Activated T-helper 1 cell treated with anti-CD3 and anti-CD28 coated beads, Interleukin-12 subunit alpha, Interleukin-12 subunit beta, Interleukin-2, Interleukin-4 antibody, amounts not matched to agents 30 ng/mL and 10 ng/mL and 1 ng/mL, durations not matched to agents 14 hours and 24 hours and 36 hours (primary cell): ENCODE measurements at regions of chr2 and their contacts with region 1.

Region 1: GRCh38 chr2:36246320-36246990 is 109.1 kb upstream of the CRIM1 start:
- DNase-seq: peak; percentile 26
- H3K4me3 Mint-ChIP-seq: peak overlapping the region; percentile 21
- H3K27ac Mint-ChIP-seq: peak overlapping the region; percentile 94
- H3K4me1 Mint-ChIP-seq: peaks cover 71% of the 10 kb centered on the region
- H3K27me3 Mint-ChIP-seq: peaks cover 6% of the 10 kb centered on the region

Region 2: DNA sequence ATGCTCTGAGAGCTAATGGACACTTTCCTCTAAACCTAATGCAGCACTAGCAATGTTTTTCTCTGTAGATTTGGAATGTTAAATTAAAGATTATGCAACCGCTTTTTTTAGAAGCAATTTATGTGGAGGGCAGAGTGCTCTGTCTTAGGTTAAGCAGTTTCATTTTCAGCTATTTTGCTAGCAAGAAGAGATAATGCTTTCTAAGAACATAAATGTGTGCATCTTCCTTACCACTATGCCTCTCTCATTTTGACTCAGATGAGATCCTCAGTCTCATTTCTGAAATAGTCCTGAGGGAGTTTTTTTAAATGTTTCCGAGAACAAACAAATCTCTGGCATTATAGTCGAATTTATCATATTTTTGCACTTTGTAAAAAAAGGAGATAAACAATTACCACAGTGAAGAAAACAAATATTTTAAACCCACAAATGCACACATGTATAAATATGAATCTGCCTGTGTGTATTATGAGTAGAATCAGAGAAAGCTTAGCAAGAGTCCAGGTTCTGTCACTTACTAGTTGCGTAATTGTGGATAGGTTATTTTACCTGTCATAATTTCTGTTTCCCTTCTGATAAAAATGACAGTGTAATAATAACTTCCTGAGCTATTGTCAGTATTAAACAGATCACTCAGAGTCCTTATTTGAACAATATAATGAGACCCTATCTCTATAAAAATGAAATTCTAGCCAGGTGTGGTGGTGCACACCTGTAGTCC is 98.6 kb before region 1 on chr2:
- intact Hi-C with region 1: loop called (anchors 1 kb)
- DNase-seq: no peak
- H3K4me3 Mint-ChIP-seq: peak overlapping the region; percentile 19
- H3K27ac Mint-ChIP-seq: peak overlapping the region; percentile 49
- H3K4me1 Mint-ChIP-seq: peaks cover 26% of the 10 kb centered on the region
- H3K27me3 Mint-ChIP-seq: peaks cover 17% of the 10 kb centered on the region

Region 3: DNA sequence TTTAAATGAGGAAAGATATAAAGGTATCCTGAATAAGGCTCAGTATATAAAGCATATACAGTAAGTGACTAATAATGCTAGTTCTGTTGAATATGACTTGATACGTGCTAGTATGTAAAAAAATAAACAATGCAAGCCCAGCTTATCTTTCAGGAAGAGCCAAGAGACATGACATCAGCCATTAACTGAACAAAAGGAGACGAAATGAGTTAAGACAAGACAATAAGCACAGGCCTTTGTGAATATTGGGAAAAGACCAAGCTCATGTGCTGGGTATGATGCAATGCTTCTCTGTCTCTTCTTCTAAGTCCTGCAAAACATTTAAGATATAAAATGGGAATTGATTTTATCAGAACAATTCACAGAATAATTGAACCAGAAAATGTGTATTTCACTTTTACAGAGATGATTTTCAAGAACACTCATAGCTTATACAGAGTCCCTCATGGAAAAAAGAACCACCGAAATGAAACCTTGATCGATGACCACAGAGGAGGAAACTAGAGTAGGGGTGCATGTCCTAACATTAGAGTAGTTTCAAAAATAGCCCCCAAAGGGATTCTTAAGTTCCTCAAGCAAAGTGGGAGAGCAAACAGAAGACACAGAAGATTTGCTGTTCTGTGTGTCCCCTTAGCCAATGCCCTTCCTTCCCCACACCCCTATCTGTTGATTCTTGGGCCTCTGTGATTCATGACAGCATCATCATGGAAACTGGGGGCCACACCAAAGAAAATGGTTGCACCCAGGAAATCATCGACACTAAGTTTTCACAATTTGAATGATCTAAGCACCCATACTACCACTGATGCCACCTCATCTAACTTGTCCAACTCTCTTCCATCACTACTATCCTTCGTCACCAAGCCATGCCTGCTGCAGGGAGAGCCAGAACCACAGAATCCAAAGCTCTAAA is 41.2 kb after region 1 on chr2:
- intact Hi-C with region 1: loop called (anchors 2 kb)
- DNase-seq: no peak
- H3K4me3 Mint-ChIP-seq: no peak overlapping the region
- H3K27ac Mint-ChIP-seq: peak overlapping the region; percentile 61
- H3K4me1 Mint-ChIP-seq: peaks cover 13% of the 10 kb centered on the region
- H3K27me3 Mint-ChIP-seq: no peaks in the 10 kb centered on the region

Region 4: GRCh38 chr2:36507408-36507812 is 261.0 kb after region 1 on chr2:
- intact Hi-C with region 1: loop called (anchors 5 kb)
- DNase-seq: no peak
- H3K4me3 Mint-ChIP-seq: no peak overlapping the region
- H3K27ac Mint-ChIP-seq: no peak overlapping the region
- H3K4me1 Mint-ChIP-seq: no peaks in the 10 kb centered on the region
- H3K27me3 Mint-ChIP-seq: no peaks in the 10 kb centered on the region

Region 5: GRCh38 chr2:37080266-37080665 is 833.8 kb after region 1 on chr2:
- intact Hi-C with region 1: no loop called
- DNase-seq: no peak
- H3K4me3 Mint-ChIP-seq: peak overlapping the region; percentile 24
- H3K27ac Mint-ChIP-seq: no peak overlapping the region
- H3K4me1 Mint-ChIP-seq: peaks cover 30% of the 10 kb centered on the region
- H3K27me3 Mint-ChIP-seq: no peaks in the 10 kb centered on the region

Region 6: DNA sequence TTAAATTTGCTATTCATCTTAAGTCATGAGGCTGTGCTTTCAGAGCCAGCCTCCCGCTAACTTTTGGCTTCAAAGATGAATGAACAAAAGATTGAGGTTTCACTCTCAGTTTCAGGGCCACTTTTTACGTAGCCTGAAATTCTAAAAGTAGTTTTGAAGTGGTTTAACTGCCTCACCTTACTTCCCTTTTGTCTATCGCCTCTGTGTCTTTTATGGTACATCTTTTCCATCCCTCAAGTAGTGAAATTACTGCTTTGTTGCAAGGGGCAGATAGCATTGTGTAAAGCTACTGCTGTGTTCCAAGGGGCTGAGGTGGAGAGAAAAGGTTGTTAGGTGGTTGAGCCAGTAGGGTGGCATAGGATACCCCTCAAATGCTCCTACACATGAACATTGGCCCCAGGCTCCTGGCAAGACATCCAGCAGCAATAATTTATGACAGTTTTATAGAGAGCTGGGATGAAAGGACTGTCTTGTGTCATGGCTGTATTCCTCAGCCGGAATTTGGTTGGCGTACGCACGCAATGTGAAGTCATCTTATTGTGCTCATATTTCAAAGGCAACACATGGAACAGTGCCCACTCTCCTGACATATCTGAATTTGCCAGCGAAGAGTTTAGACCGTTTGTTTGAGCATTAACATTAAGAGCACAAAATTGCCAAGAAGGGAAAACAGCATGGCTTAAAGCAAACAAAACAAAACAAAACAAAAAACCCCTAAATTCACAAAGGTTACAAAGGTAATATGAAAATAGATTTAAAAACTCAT is 1130.1 kb after region 1 on chr2:
- intact Hi-C with region 1: loop called (anchors 5 kb)
- DNase-seq: peak; percentile 29
- H3K4me3 Mint-ChIP-seq: peak overlapping the region; percentile 34
- H3K27ac Mint-ChIP-seq: peak overlapping the region; percentile 88
- H3K4me1 Mint-ChIP-seq: peaks cover 51% of the 10 kb centered on the region
- H3K27me3 Mint-ChIP-seq: peaks cover 51% of the 10 kb centered on the region